ENCODE measurements at regions of chr10 and their contacts with region 1.

Region 1: DNA sequence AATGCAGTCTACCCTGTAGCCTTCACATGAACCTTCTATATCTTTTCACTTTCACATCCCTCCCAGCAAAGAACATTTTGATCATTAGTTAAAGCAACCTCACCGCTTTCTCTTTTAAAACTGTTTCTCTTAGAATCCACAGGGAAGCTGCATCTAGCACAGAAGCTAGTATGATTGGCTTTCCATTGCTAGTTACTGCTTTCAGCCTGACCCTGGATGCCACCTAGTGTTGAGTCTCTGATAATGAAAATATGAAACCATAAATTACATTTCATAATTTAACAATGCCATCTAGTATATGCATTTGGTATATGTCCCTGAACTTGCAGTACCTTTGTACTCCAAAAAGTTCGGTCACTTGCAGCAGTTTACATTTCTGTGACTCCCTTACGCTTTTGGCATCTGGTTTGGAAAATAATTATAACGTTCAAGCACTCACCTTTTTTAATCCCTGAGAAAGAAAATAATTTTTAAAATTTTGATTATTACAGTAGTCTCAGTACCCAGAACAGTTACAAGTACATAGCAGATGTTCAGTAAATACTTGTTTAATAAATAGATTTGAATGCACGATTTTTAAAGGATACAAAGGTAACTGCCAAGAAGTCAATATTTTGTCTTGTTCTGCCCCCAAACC is 22.7 kb downstream of the CISD1 start:
- DNase-seq: no peak
- ATAC-seq: peak; percentile 91
- H3K4me3 ChIP-seq: no peak overlapping the region
- H3K27ac ChIP-seq: no peak overlapping the region
- H3K4me1 ChIP-seq: no peaks in the 10 kb centered on the region
- H3K27me3 ChIP-seq: no peaks in the 10 kb centered on the region
- CTCF ChIP-seq: peak; percentile 65 to 78 (median 71); a peak in 5 of 6 replicates
- EP300 ChIP-seq: no peak
- POLR2A ChIP-seq: no peak
- RAD21 ChIP-seq: peak; percentile 94

Region 2: DNA sequence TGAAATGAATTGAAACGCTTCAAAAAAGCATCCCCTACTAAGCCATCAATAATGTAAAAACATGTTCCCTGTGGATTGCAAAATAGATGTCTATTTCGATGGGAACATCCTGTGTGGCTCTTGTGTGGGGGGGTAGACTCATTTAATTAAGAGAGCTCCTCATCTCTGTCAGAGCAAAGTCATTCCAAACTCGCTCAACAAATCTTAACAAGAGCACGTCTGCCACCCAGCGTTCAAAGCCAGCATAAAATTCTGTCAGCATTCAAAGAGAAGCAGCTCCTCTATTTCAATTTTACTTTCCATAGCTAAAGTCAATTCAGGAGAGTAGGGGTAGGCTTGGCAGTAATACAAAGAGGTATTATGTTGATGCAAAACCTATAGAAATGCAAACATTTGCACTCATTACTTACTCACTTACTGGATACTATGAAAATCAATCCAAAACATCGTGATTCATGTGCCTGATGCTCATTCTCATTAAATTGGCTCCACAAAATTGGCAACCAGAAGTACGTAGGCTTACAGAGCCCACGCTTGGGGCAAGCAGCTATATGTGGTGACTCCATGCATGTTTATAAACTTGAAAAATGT is 138.9 kb before region 1 on chr10:
- CTCF ChIA-PET with region 1: interaction called, 13 read pairs
- POLR2A ChIA-PET with region 1: no interaction called
- RAD21 ChIA-PET with region 1: interaction called, 6 read pairs
- SMC1A ChIA-PET with region 1: interaction called, 4 read pairs
- in situ Hi-C with region 1: no loop called
- intact Hi-C with region 1: no loop called
- DNase-seq: no peak
- ATAC-seq: peak; percentile 70
- H3K4me3 ChIP-seq: no peak overlapping the region
- H3K27ac ChIP-seq: no peak overlapping the region
- H3K4me1 ChIP-seq: no peaks in the 10 kb centered on the region
- H3K27me3 ChIP-seq: no peaks in the 10 kb centered on the region
- CTCF ChIP-seq: peak; percentile 47 to 64 (median 57); a peak in 5 of 6 replicates
- EP300 ChIP-seq: no peak
- POLR2A ChIP-seq: no peak
- RAD21 ChIP-seq: peak; percentile 58

Region 3: DNA sequence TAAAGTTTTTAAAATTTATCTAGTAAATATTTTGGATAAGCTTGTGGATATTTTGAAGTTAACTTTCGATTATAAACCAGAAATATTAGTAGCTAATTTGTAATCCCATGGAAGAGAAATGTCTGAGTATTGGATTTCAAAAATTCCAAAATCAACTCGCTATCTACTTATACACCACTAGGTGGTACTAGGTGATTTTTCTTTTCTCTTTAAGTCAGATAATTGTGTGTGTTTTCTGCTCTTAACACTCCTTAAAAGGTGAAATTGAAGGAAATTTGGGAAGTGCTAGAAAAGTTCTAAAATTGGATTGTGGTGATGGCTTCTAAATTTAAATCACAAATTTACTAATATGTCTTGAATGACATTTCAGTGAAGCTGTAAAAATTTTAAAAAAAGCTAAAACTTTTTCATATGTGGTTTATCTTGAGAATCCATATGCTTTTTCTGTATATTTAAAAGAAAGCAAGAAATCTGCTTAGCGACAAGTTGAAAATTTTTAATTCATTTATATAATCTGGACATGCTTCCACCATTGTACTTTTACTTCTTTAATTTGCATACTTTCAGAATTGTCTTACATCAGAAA is 114.2 kb before region 1 on chr10:
- CTCF ChIA-PET with region 1: interaction called, 385 read pairs
- POLR2A ChIA-PET with region 1: interaction called, 5 read pairs
- RAD21 ChIA-PET with region 1: interaction called, 144 read pairs
- SMC1A ChIA-PET with region 1: interaction called, 203 read pairs
- in situ Hi-C with region 1: no loop called
- intact Hi-C with region 1: loop called (anchors 1 kb)
- DNase-seq: no peak
- ATAC-seq: peak; percentile 46; the same call in 2 of the 3 replicates
- H3K4me3 ChIP-seq: no peak overlapping the region
- H3K27ac ChIP-seq: no peak overlapping the region
- H3K4me1 ChIP-seq: no peaks in the 10 kb centered on the region
- H3K27me3 ChIP-seq: no peaks in the 10 kb centered on the region
- CTCF ChIP-seq: peak; percentile 37 to 65 (median 48); a peak in 5 of 6 replicates
- EP300 ChIP-seq: no peak
- POLR2A ChIP-seq: no peak
- RAD21 ChIP-seq: peak; percentile 79

Region 4: GRCh38 chr10:58189269-58189668 is 102.4 kb before region 1 on chr10:
- CTCF ChIA-PET with region 1: interaction called, 9 read pairs
- POLR2A ChIA-PET with region 1: no interaction called
- RAD21 ChIA-PET with region 1: interaction called, 13 read pairs
- SMC1A ChIA-PET with region 1: interaction called, 5 read pairs
- in situ Hi-C with region 1: loop called (anchors 5 kb)
- intact Hi-C with region 1: no loop called
- DNase-seq: no peak
- ATAC-seq: no peak
- H3K4me3 ChIP-seq: no peak overlapping the region
- H3K27ac ChIP-seq: no peak overlapping the region
- H3K4me1 ChIP-seq: no peaks in the 10 kb centered on the region
- H3K27me3 ChIP-seq: no peaks in the 10 kb centered on the region
- CTCF ChIP-seq: no peak
- EP300 ChIP-seq: no peak
- POLR2A ChIP-seq: no peak
- RAD21 ChIP-seq: no peak

Region 5: DNA sequence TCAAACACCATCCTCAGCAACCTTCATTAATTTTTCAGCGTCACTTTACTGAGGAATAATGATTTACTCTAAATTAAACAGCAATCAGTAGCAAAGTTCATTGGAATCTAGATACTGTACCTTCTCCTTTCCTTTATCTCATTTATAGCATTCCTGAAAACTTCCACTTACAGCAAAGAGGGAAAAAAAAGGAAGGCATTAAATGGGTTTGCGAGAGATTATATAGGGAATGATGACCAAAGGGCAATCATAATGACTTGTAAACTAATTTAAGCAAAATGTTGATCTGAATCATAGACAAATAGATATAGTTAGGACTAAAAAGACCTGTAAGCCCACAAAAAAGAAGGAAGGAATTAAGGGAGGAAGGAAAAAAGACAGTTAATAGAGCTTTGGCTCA is 66.0 kb before region 1 on chr10:
- CTCF ChIA-PET with region 1: interaction called, 4 read pairs
- POLR2A ChIA-PET with region 1: no interaction called
- RAD21 ChIA-PET with region 1: no interaction called
- SMC1A ChIA-PET with region 1: interaction called, 12 read pairs
- in situ Hi-C with region 1: no loop called
- intact Hi-C with region 1: no loop called
- DNase-seq: no peak
- ATAC-seq: no peak
- H3K4me3 ChIP-seq: no peak overlapping the region
- H3K27ac ChIP-seq: no peak overlapping the region
- H3K4me1 ChIP-seq: no peaks in the 10 kb centered on the region
- H3K27me3 ChIP-seq: no peaks in the 10 kb centered on the region
- CTCF ChIP-seq: no peak
- EP300 ChIP-seq: no peak
- POLR2A ChIP-seq: no peak
- RAD21 ChIP-seq: no peak

Region 6: DNA sequence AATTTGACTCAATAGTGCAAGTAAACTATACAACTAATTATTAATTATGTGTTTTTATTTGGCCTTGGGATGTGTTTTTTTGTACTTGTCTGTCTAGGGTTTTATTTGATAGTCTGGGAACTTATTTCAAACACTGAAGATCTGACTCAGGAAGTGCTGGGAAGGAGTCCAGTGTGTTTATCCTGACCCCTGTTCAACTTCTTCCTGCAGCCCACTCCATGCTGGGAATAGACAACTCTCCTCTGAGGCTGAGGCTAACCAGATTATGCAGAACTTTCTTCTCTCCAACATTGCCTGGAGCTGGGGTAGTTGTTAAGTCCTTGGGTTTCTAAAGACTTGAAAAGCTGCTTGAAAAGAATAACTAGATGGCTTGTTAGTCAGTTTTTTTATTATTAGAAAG is 15.7 kb before region 1 on chr10:
- CTCF ChIA-PET with region 1: interaction called, 59 read pairs
- POLR2A ChIA-PET with region 1: no interaction called
- RAD21 ChIA-PET with region 1: interaction called, 16 read pairs
- SMC1A ChIA-PET with region 1: interaction called, 26 read pairs
- in situ Hi-C with region 1: no loop called
- intact Hi-C with region 1: no loop called
- DNase-seq: no peak
- ATAC-seq: no peak
- H3K4me3 ChIP-seq: no peak overlapping the region
- H3K27ac ChIP-seq: no peak overlapping the region
- H3K4me1 ChIP-seq: no peaks in the 10 kb centered on the region
- H3K27me3 ChIP-seq: no peaks in the 10 kb centered on the region
- CTCF ChIP-seq: no peak
- EP300 ChIP-seq: no peak
- POLR2A ChIP-seq: no peak
- RAD21 ChIP-seq: no peak